GM12878 (cell line): ENCODE measurements at regions of chr5 and their contacts with region 1.

Region 1: GRCh38 chr5:40904205-40904993 is 4.9 kb upstream of the C7 start:
- DNase-seq: peak; percentile 15
- ATAC-seq: peak; percentile 99
- H3K4me3 ChIP-seq: no peak overlapping the region
- H3K27ac ChIP-seq: no peak overlapping the region
- H3K4me1 ChIP-seq: no peaks in the 10 kb centered on the region
- H3K27me3 ChIP-seq: no peaks in the 10 kb centered on the region
- CTCF ChIP-seq: peak; percentile 90 to 98 (median 98)
- EP300 ChIP-seq: no peak
- POLR2A ChIP-seq: no peak
- RAD21 ChIP-seq: peak; percentile 81

Region 2: DNA sequence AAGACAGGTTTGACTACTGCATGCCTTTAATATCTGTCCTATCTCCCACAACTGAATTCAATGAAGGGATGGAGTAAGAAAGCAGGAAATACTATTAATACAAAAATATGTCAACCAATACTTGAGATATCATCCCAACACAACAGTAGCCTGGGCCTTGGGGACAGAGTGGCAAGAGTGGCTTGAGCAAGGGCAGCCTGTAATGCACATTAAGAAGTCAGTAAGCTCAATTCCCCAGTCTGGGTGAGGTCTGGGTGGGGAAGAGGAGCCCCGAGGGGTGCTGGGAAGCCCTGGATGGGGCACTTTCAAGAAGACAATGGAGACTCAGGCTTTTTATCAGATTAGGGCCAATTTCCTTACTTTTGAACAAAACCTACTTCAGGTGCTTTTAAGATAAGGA is 38.1 kb before region 1 on chr5:
- CTCF ChIA-PET with region 1: no interaction called
- POLR2A ChIA-PET with region 1: no interaction called
- RAD21 ChIA-PET with region 1: no interaction called
- SMC1A ChIA-PET with region 1: no interaction called
- in situ Hi-C with region 1: no loop called
- intact Hi-C with region 1: no loop called
- DNase-seq: no peak
- ATAC-seq: no peak
- H3K4me3 ChIP-seq: no peak overlapping the region
- H3K27ac ChIP-seq: no peak overlapping the region
- H3K4me1 ChIP-seq: no peaks in the 10 kb centered on the region
- H3K27me3 ChIP-seq: no peaks in the 10 kb centered on the region; a peak in 1 of 4 replicates
- CTCF ChIP-seq: no peak
- EP300 ChIP-seq: no peak
- POLR2A ChIP-seq: no peak
- RAD21 ChIP-seq: no peak

Region 3: DNA sequence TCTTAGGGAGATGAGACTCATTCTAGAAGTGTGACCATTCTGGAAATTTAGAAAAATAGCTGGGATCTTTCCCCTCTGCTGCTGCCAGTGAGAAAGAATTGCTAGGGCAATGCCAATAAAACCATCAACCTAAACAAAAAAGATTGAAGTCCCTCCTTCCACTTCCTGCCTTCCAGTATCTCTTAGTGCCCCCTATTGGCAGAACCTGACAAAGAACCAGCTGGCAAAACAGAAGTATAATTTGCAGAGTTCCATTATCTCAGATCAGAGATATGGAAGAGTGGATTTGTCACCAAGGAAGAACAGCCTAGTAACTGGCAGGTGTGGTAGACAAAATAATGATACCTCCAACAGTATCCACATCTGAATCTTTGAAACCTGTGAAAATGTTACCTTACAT is 619.8 kb after region 1 on chr5:
- CTCF ChIA-PET with region 1: interaction called, 4 read pairs
- POLR2A ChIA-PET with region 1: no interaction called
- RAD21 ChIA-PET with region 1: interaction called, 3 read pairs
- SMC1A ChIA-PET with region 1: interaction called, 5 read pairs
- in situ Hi-C with region 1: no loop called
- intact Hi-C with region 1: loop called (anchors 5 kb)
- DNase-seq: no peak
- ATAC-seq: peak; percentile 34; the same call in 1 of the 3 replicates
- H3K4me3 ChIP-seq: no peak overlapping the region
- H3K27ac ChIP-seq: no peak overlapping the region
- H3K4me1 ChIP-seq: no peaks in the 10 kb centered on the region
- H3K27me3 ChIP-seq: no peaks in the 10 kb centered on the region
- CTCF ChIP-seq: peak; percentile 42 to 49 (median 44); a peak in 5 of 6 replicates
- EP300 ChIP-seq: no peak
- POLR2A ChIP-seq: no peak
- RAD21 ChIP-seq: peak; percentile 59